ENCODE measurements at regions of chr16 and their contacts with region 1.

Region 1: GRCh38 chr16:2251483-2252240 is at the start of gene ECI1:
- DNase-seq: peak; percentile 98
- H3K4me3 ChIP-seq: peak within 1 kb of the TSS; percentile 70 to 93 (median 78)
- H3K27ac ChIP-seq: peak within 1 kb of the TSS; percentile 85 to 97 (median 92)
- H3K4me1 ChIP-seq: peaks cover 23 to 28% (median 26%) of the 10 kb centered on the region in 4 donors
- H3K27me3 ChIP-seq: no peaks in the 10 kb centered on the region
- CTCF ChIP-seq: peak; percentile 76 to 86 (median 80)
- EP300 ChIP-seq: no peak
- POLR2A ChIP-seq: peak; percentile 77
- total RNA-seq, gene ECI1: 51.9 to 115 (median 86.6) TPM

Region 2: DNA sequence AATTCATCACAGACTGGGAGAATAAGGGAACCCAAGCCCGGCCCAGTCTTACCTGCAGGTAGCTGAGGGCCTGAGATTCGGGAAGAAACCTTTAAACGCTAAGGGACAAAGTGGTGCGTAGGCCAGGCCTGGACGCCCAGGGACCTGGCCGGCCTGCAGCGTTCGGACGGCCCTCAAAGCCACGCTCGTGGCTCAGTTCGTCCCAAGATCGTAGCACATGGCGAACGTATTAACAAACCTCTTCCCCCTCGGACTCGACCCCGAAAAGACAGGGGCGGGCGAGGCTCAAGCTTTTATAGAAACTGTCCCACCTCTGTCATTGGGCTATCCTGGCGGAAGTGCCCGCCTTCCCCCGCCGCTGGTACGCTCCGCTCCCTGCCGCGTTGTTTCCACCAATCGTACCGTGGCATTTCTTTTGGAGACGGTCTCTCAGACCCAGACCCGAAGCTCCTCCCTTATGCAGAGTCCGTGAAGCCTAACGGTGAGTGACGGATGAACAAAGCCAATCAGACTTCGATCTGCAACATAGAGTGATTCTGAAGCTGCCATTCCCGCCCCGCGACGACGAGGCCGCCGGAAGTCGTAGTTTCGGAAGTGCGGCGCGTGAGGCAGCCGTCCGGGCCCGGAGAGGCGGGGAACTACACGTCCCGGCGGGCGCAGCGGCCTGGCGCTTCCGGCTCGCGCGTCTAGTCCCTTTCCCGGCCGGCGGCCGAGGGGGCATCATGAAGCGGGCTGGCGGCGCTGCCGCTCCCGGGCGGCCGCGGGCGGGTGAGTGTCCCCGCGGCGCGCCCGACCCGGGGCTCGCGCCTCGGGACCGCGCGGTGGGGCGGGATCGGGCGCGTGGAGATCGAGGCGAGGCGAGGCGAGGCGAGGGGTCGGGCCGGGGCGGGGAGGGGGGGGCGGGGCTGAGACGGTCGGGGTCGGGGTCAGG is 96.3 kb before region 1 on chr16 and contains the start of gene TRAF7:
- intact Hi-C with region 1: loop called (anchors 5 kb)
- DNase-seq: peak; percentile 100
- H3K4me3 ChIP-seq: peak within 1 kb of the TSS; percentile 62 to 92 (median 71)
- H3K27ac ChIP-seq: peak within 1 kb of the TSS; percentile 90 to 96 (median 93)
- H3K4me1 ChIP-seq: peaks cover 83 to 91% (median 89%) of the 10 kb centered on the region in 4 donors
- H3K27me3 ChIP-seq: no peaks in the 10 kb centered on the region
- CTCF ChIP-seq: no peak
- EP300 ChIP-seq: no peak
- POLR2A ChIP-seq: peak; percentile 100
- total RNA-seq, gene TRAF7: 42.6 to 64.5 (median 54.3) TPM

Region 3: GRCh38 chr16:2205104-2205966 is 46.3 kb before region 1 on chr16 and contains the start of gene MLST8:
- intact Hi-C with region 1: no loop called
- DNase-seq: peak; percentile 96
- H3K4me3 ChIP-seq: peak within 1 kb of the TSS; percentile 65 to 87 (median 78)
- H3K27ac ChIP-seq: peak within 1 kb of the TSS; percentile 90 to 97 (median 96)
- H3K4me1 ChIP-seq: peaks cover 14 to 29% (median 23%) of the 10 kb centered on the region in 4 donors
- H3K27me3 ChIP-seq: no peaks in the 10 kb centered on the region
- CTCF ChIP-seq: peak in 2 of 3 experiments; percentile 18 to 22
- EP300 ChIP-seq: no peak
- POLR2A ChIP-seq: peak; percentile 70
- total RNA-seq, gene MLST8: 23.7 to 62.8 (median 36.3) TPM